CD8-positive, alpha-beta T cell (primary cell): ENCODE measurements at regions of chr14 and their contacts with region 1.

Region 1: DNA sequence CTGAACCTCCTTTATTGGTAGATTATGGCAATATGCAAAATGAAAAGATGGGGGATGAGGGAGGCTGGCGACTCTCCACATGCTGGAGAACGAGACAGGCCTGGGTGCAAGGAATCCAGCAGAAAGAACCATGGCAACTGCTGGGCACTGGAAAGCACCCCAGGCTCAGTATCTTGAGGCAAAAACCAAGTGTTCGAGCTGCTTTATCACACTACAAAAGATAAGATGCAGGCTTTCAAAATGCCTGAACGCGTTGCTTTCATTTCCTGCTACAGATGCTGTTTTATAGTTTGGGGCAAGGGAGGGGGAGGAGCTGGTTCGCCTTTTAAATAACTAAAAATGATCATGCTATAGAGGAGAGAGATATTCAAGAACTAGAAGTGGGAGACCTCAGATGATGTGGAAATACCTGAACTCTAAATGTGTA is 38.9 kb downstream of the NIN start:
- DNase-seq: peak in 4 of 9 experiments; percentile 18 to 70 (median 50)
- ATAC-seq: peak; percentile 54
- H3K4me3 ChIP-seq: peak overlapping the region; percentile 30 to 39
- H3K4me3 Mint-ChIP-seq: peak overlapping the region; percentile 79
- H3K27ac ChIP-seq: peak overlapping the region; percentile 59 to 75
- H3K27ac Mint-ChIP-seq: peak overlapping the region; percentile 98
- H3K4me1 ChIP-seq: peaks cover 60% of the 10 kb centered on the region
- H3K4me1 Mint-ChIP-seq: peaks cover 95% of the 10 kb centered on the region
- H3K27me3 ChIP-seq: no peaks in the 10 kb centered on the region
- H3K27me3 Mint-ChIP-seq: no peaks in the 10 kb centered on the region
- CTCF ChIP-seq: no peak

Region 2: GRCh38 chr14:50778721-50779483 is 13.2 kb before region 1 on chr14:
- CTCF ChIA-PET with region 1: interaction called, 109 read pairs
- POLR2A ChIA-PET with region 1: interaction called, 5 read pairs
- intact Hi-C with region 1: loop called in 1 of 2 experiments (anchors 1 kb)
- DNase-seq: peak in 1 of 9 experiments; percentile 28
- ATAC-seq: peak; percentile 27
- H3K4me3 ChIP-seq: no peak overlapping the region
- H3K4me3 Mint-ChIP-seq: no peak overlapping the region
- H3K27ac ChIP-seq: peak overlapping the region in 1 of 2 experiments; percentile 17
- H3K27ac Mint-ChIP-seq: peak overlapping the region; percentile 80
- H3K4me1 ChIP-seq: peaks cover 57% of the 10 kb centered on the region
- H3K4me1 Mint-ChIP-seq: peaks cover 68% of the 10 kb centered on the region
- H3K27me3 ChIP-seq: no peaks in the 10 kb centered on the region
- H3K27me3 Mint-ChIP-seq: no peaks in the 10 kb centered on the region
- CTCF ChIP-seq: no peak

Region 3: DNA sequence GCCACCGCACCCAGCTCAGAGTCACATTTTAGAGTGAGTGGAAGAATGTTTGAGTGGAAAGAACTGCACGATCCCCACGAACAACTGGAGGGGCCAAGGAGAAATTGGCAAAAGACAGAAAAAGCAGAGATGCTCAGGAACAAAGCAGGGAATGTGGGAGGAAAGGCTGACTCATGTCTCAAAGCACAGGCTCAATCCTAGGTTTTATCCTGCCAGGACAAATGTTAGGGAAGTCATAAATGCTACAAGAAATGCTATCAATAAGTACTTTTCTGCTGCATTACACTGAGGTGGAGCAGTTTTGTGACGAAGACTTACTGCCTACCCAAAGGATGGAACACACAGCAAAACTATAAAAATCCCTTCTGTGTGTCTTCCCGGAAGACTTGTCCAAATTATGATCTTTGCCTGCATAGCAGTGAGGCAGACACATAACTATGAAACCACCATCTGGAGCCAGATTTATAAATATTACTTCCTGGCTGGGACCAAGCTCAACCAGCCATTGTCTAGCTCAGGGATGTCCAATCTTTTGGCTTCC is 12.2 kb after region 1 on chr14:
- CTCF ChIA-PET with region 1: interaction called, 5 read pairs
- POLR2A ChIA-PET with region 1: interaction called, 7 read pairs
- intact Hi-C with region 1: loop called in 1 of 2 experiments (anchors 2 kb)
- DNase-seq: no peak
- ATAC-seq: no peak
- H3K4me3 ChIP-seq: no peak overlapping the region
- H3K4me3 Mint-ChIP-seq: no peak overlapping the region
- H3K27ac ChIP-seq: no peak overlapping the region
- H3K27ac Mint-ChIP-seq: peak overlapping the region; percentile 68
- H3K4me1 ChIP-seq: peaks cover 8% of the 10 kb centered on the region
- H3K4me1 Mint-ChIP-seq: peaks cover 72% of the 10 kb centered on the region
- H3K27me3 ChIP-seq: no peaks in the 10 kb centered on the region
- H3K27me3 Mint-ChIP-seq: no peaks in the 10 kb centered on the region
- CTCF ChIP-seq: no peak

Region 4: DNA sequence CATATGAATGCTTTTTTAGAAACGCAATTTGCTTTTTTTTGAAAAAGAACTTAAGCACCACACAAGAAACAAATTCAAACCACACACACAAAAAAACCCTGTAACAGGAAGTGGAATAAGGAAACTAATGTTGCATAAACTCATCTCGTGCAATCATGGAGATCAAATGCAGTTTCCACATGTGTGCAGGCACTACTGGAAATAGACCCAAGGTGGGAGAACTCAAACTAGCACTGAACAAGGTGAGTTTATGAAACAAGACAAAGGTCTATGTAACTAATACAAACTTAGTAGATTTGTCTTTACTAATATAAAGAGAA is 21.4 kb after region 1 on chr14:
- CTCF ChIA-PET with region 1: interaction called, 6 read pairs
- POLR2A ChIA-PET with region 1: interaction called, 7 read pairs
- intact Hi-C with region 1: loop called in 1 of 2 experiments (anchors 2 kb)
- DNase-seq: peak in 3 of 9 experiments; percentile 44 to 76 (median 57)
- ATAC-seq: peak; percentile 85
- H3K4me3 ChIP-seq: peak overlapping the region in 1 of 2 experiments; percentile 9
- H3K4me3 Mint-ChIP-seq: peak overlapping the region; percentile 77
- H3K27ac ChIP-seq: peak overlapping the region in 1 of 2 experiments; percentile 44
- H3K27ac Mint-ChIP-seq: peak overlapping the region; percentile 92
- H3K4me1 ChIP-seq: peaks cover 49% of the 10 kb centered on the region
- H3K4me1 Mint-ChIP-seq: peaks cover 69% of the 10 kb centered on the region
- H3K27me3 ChIP-seq: no peaks in the 10 kb centered on the region
- H3K27me3 Mint-ChIP-seq: no peaks in the 10 kb centered on the region
- CTCF ChIP-seq: no peak

Region 5: DNA sequence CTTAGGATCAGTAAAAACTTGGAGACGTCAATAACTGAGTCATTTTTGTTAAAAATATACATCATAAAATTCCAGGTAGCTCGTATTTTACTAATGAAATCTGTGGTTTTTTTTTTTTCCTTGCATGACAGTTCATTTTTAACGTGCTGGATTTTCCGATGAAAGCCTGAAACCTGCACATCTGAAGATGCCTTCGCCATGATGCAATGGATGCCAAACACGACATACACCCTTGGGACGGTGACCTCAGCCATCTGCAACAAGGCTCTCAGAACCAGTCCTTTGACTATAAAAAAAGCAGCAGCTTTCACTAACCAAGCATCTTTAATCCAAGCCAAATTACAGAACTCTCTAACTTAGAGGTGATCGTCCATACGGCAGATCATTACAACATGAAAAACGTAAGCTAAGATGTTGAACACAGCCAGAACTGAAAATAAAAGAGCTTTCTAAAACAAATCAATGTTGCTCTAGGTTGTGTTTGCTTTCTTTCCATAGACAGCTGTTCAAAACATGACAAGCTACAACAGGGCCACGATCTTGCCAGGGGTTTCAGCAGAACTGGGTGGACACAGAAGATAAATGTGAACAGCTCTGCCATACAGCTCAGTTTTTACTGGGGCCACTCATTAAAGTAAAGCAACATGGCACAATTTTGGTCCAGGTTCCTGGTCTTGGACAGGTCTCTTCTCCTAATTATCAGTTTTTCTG is 31.1 kb after region 1 on chr14:
- CTCF ChIA-PET with region 1: interaction called, 40 read pairs
- POLR2A ChIA-PET with region 1: interaction called, 12 read pairs
- intact Hi-C with region 1: loop called (anchors 2 to 5 kb)
- DNase-seq: peak in 2 of 9 experiments; percentile 13 to 36
- ATAC-seq: no peak
- H3K4me3 ChIP-seq: peak overlapping the region; percentile 21 to 28
- H3K4me3 Mint-ChIP-seq: peak overlapping the region; percentile 79
- H3K27ac ChIP-seq: peak overlapping the region; percentile 54 to 64
- H3K27ac Mint-ChIP-seq: peak overlapping the region; percentile 98
- H3K4me1 ChIP-seq: peaks cover 93% of the 10 kb centered on the region
- H3K4me1 Mint-ChIP-seq: peaks cover 91% of the 10 kb centered on the region
- H3K27me3 ChIP-seq: no peaks in the 10 kb centered on the region
- H3K27me3 Mint-ChIP-seq: no peaks in the 10 kb centered on the region
- CTCF ChIP-seq: no peak